ENCODE measurements at regions of chr10 and their contacts with region 1.

Region 1: DNA sequence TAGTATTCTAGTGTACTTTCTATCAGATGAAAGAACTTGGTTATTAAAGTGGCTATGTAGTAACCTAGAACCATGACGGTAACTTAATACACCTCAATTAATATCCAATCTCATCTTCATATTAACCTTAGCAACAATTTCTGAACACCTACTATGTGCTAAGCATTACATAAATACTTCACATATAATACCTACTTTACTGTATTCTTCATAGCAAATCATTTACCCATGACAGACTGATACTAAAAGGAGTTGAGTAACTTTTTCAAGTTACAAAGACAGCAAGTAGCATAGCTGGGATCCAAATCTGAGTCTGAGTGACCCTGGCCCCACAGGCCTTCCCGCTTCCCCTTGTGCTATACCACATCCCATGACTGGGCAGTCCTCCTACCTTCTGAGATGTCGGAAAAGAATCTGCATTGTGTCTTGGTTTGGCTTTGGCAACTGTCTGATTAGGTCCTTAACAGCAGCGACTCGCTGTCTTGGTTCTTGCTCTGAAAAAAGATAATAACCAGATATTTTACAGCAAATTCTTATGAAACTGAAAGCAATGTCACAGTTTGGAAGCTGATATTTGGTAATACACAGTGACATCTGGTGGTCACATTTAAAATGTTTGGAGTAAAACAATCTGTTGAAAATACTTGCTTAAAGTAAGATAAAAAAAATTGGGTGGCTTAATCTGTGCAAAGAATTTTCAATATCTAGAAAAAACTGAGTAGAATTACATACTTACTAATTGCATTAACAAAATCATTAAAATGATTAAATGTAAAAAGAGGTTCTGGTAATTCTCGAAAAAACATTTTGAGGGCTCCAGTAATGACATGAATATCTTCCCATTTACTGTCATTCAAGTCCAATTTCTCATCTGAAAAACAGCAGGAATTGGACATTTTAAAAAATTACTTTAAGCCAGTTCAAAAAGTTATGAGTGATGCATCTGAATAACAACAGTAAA is 120.1 kb downstream of the ARHGAP12 start:
- ATAC-seq: peak; percentile 57 to 83 (median 68)
- H3K4me3 ChIP-seq: no peak overlapping the region
- H3K27ac ChIP-seq: no peak overlapping the region
- H3K4me1 ChIP-seq: peaks cover 2 to 3% of the 10 kb centered on the region in 2 donors

Region 2: DNA sequence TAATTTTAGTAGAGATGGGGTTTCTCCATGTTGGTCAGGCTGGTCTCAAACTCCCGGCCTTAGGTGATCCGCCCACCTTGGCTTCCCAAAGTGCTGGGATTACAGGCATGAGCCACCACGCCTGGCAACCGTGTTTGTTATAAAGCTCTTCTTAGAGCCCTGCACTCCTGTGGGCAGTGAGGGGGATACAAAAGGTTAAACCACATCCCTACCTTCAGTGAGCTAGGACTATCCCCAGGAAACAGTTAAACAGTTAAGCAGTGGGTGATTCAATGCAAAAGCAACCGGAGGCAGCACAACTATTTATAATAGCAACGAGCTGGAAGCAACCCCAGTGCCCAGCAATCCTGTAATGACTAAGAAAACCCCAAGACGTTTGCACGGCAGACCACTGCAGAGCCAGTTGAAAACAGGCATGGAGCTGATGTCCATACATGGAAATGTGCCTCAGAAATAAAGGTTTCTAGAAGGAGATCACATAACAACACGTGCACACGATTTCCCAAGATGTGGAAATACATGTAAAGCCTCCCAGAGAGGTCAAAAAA is 1071.8 kb before region 1 on chr10:
- in situ Hi-C with region 1: loop called in 4 of 9 experiments (anchors 25 kb)
- ATAC-seq: peak; percentile 79 to 99 (median 94)
- H3K4me3 ChIP-seq: no peak overlapping the region
- H3K27ac ChIP-seq: no peak overlapping the region
- H3K4me1 ChIP-seq: no peaks in the 10 kb centered on the region

Region 3: DNA sequence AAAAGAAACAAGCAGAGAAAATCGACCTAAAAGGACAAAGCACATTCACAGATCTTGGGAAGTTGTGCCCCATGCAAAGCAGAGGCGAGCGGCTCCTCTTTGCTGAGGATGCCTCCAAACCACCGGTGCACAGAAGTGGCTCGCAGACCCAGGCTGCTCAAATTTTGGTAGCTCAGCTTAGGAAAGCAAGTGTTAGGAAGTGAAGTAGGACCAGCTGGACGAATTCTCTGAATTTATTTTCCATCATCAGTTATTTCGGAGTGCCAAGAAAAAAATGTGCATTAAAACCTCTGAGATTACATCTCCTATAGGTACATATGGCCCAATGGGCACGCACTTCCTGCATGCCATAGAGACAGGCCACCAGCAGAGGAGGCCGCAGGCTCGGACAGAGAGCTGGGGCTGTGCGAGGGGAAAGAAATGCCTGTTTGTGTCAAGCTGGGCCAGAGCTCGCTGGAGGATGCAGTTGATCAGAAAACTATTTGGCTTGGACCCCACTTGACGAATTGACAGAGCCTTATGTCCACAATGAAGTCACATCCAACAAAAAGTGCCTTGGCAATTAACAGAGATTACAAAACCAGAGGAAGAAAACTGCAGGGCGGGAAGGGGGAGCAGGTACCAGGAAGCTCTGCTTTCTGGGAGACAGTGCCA is 1056.7 kb before region 1 on chr10:
- in situ Hi-C with region 1: loop called in 5 of 9 experiments (anchors 25 kb)
- ATAC-seq: peak; percentile 53 to 92 (median 70)
- H3K4me3 ChIP-seq: no peak overlapping the region
- H3K27ac ChIP-seq: no peak overlapping the region
- H3K4me1 ChIP-seq: peaks cover 21 to 22% of the 10 kb centered on the region in 2 donors

Region 4: DNA sequence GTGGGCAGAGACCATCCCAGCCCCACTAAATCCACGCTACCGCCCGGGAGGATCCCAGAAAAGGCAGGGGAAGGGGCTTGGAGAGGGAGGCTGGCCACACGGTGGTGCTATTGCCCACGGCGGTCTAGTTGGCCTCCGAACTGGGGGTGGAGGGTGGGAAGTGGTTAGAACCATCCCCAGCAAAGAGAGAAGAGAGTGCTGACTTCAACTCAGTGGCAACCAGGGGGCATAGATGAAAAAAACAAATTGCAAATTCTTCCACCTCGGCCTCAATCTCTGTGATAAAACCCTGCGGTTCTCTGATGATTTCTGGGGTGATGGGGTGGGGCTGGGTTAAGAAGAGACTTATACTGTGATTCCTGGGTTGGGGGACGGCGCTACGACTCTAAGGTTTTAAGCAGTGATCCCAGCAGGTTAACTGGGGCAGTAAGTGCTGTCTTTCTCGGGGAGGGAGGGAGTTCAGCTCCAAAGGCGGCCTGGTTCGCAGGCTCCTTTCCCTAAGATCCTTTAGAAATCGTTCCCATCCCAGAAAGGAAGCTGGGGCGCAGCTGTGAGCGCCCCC is 1024.5 kb before region 1 on chr10:
- in situ Hi-C with region 1: loop called in 3 of 9 experiments (anchors 25 kb)
- ATAC-seq: peak; percentile 38 to 77 (median 68)
- H3K4me3 ChIP-seq: peak overlapping the region; percentile 34 to 53 (median 39)
- H3K27ac ChIP-seq: peak overlapping the region; percentile 4 to 56
- H3K4me1 ChIP-seq: peaks cover 7 to 9% of the 10 kb centered on the region in 2 donors

Region 5: GRCh38 chr10:31340343-31340742 is 468.2 kb before region 1 on chr10:
- in situ Hi-C with region 1: loop called in 1 of 9 experiments (anchors 25 kb)
- ATAC-seq: peak in 1 of 8 experiments; percentile 66
- H3K4me3 ChIP-seq: no peak overlapping the region
- H3K27ac ChIP-seq: no peak overlapping the region
- H3K4me1 ChIP-seq: peaks cover 0 to 12% of the 10 kb centered on the region in 2 donors

Region 6: GRCh38 chr10:31928549-31929260 is 120.2 kb after region 1 on chr10 and contains the start of gene ARHGAP12:
- in situ Hi-C with region 1: no loop called
- ATAC-seq: peak; percentile 76 to 90 (median 86)
- H3K4me3 ChIP-seq: peak within 1 kb of the TSS; percentile 86 to 99 (median 98)
- H3K27ac ChIP-seq: peak within 1 kb of the TSS; percentile 96 to 97
- H3K4me1 ChIP-seq: peaks cover 5 to 10% of the 10 kb centered on the region in 2 donors
- total RNA-seq, gene ARHGAP12: 20.9 to 50.3 (median 29.7) TPM

Measured in motor neuron (in vitro differentiated cells).